ENCODE measurements at regions of chr7 and their contacts with region 1.

Region 1: DNA sequence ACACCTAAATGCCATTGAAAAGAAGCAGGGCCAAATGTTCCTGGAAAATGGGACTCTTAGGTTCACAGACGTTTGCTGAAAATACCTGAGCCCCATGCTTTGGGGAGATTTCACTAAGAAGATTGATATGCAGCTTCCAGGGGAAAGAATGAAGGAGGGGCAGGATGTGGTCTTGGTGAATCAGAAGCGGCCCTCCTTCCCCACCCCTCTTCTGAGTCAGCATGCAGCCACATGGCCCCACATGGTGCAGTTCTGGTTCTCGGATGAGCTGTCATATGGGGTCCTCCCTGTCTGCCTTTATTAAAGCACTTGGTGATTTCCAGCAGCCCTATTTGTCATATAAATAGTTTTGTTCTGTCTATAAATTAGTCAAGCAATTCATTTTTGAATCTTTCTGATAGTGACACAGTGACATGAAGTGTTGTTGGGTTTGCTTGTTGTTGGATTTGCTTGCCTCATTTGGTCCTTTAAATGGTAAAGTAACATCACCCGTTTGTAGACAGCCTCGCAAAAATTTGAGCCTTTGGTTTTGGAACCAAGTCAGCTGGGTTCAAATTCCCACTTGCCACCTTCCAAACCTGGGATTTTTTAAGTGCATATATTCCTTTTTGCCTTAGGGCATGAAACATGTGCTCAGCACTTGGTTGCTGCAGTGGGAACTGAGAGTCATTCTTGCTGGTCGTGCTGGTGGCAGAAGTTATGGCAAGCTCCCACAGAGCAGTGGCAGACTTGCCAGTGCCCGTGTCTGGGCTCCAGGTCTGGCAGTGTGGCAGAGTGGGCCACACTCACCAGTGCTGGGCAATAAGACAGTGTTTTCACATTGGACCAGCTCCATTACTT is 68.1 kb upstream of the CDK6 start:
- DNase-seq: peak; percentile 96
- H3K4me3 Mint-ChIP-seq: peak overlapping the region; percentile 18
- H3K27ac Mint-ChIP-seq: peak overlapping the region; percentile 84
- H3K4me1 Mint-ChIP-seq: peaks cover 26% of the 10 kb centered on the region
- H3K27me3 Mint-ChIP-seq: peaks cover 5% of the 10 kb centered on the region

Region 2: DNA sequence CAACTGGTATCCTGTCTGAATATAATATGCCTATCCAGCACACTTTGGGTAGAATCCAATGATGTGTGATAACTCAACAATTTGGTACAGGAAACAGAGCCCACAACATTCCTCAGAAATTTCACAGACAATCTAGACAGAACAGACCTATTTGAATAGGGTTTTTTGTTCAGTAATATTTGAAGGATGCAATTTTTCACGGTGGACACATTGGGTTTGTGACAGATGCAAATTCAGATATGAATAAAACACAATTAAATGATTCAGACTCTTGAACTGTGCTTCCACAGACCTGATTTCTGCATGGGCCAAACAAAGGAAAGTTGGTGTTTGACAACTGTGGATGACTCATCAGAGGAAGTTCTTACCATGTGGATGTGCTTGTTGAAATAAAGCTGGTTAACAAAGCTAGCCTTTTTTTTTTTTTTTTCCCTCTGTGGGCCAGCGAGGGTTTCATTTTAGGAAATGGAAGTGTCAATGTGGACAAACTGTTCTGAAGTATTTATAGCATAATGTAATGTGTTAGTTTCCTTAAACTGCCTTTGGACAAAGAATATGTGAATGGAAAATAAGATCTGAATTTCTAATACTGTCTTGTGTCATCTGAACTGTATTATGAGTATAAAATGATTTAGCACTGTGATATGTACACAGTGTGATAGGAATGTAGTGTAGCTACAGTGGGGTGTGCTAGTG is 271.2 kb before region 1 on chr7:
- CTCF ChIA-PET with region 1: no interaction called
- intact Hi-C with region 1: loop called (anchors 1 kb)
- DNase-seq: peak; percentile 49
- H3K4me3 Mint-ChIP-seq: no peak overlapping the region
- H3K27ac Mint-ChIP-seq: peak overlapping the region; percentile 92
- H3K4me1 Mint-ChIP-seq: peaks cover 84% of the 10 kb centered on the region
- H3K27me3 Mint-ChIP-seq: no peaks in the 10 kb centered on the region

Region 3: GRCh38 chr7:92717993-92718716 is 186.4 kb before region 1 on chr7:
- CTCF ChIA-PET with region 1: no interaction called
- intact Hi-C with region 1: loop called (anchors 1 kb)
- DNase-seq: peak; percentile 82
- H3K4me3 Mint-ChIP-seq: peak overlapping the region; percentile 79
- H3K27ac Mint-ChIP-seq: peak overlapping the region; percentile 93
- H3K4me1 Mint-ChIP-seq: peaks cover 74% of the 10 kb centered on the region
- H3K27me3 Mint-ChIP-seq: no peaks in the 10 kb centered on the region

Region 4: DNA sequence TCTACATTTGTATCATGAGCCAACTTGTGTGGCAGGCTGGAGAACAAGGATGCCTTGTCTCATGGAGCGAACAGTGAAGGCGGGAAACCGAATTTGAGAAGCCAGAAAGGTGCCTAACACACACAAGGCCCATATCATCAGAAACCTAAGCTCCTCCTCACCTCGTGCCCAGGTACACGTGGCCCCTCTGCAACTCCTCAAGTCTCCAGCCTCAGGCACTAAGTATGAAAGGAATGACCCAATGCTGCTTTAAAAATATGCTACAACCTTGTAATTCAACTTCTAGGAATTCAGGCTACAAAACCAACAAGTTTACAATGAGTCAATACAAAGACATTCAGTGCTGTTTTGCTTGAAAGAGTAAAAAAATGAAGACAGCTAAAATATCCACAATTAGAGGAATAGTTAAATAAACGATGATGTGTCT is 163.8 kb before region 1 on chr7:
- CTCF ChIA-PET with region 1: no interaction called
- intact Hi-C with region 1: no loop called
- DNase-seq: no peak
- H3K4me3 Mint-ChIP-seq: no peak overlapping the region
- H3K27ac Mint-ChIP-seq: peak overlapping the region; percentile 48
- H3K4me1 Mint-ChIP-seq: peaks cover 63% of the 10 kb centered on the region
- H3K27me3 Mint-ChIP-seq: no peaks in the 10 kb centered on the region

Region 5: GRCh38 chr7:92854501-92855238 is 49.8 kb before region 1 on chr7:
- CTCF ChIA-PET with region 1: interaction called, 4 read pairs
- intact Hi-C with region 1: loop called (anchors 1 kb)
- DNase-seq: peak; percentile 39
- H3K4me3 Mint-ChIP-seq: no peak overlapping the region
- H3K27ac Mint-ChIP-seq: peak overlapping the region; percentile 46
- H3K4me1 Mint-ChIP-seq: peaks cover 16% of the 10 kb centered on the region
- H3K27me3 Mint-ChIP-seq: peaks cover 6% of the 10 kb centered on the region

Region 6: DNA sequence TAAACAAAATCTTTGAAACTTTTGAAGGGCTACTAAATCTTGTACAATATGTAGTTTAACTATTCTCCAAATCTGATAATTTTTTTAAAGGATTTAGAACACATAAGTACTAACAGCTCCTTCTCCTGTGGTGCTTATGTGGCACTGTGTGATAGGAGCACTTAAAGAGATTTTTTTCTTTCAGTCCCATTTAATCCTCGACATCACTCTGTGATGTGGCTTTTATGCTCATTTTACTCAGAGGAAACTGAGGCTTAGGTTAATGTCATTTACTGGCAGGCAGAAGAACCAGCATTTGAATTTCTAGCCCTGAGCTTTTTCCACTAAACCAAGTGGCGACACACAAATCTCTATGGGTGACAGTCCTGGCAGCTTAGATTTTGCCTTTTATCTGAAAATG is 120.9 kb after region 1 on chr7:
- CTCF ChIA-PET with region 1: no interaction called
- intact Hi-C with region 1: loop called (anchors 5 kb)
- DNase-seq: peak; percentile 17
- H3K4me3 Mint-ChIP-seq: no peak overlapping the region
- H3K27ac Mint-ChIP-seq: peak overlapping the region; percentile 50
- H3K4me1 Mint-ChIP-seq: peaks cover 35% of the 10 kb centered on the region
- H3K27me3 Mint-ChIP-seq: peaks cover 14% of the 10 kb centered on the region

Region 7: GRCh38 chr7:93218997-93219827 is 314.7 kb after region 1 on chr7:
- CTCF ChIA-PET with region 1: no interaction called
- intact Hi-C with region 1: no loop called
- DNase-seq: no peak
- H3K4me3 Mint-ChIP-seq: no peak overlapping the region
- H3K27ac Mint-ChIP-seq: no peak overlapping the region
- H3K4me1 Mint-ChIP-seq: no peaks in the 10 kb centered on the region
- H3K27me3 Mint-ChIP-seq: peaks cover 14% of the 10 kb centered on the region

Region 8: DNA sequence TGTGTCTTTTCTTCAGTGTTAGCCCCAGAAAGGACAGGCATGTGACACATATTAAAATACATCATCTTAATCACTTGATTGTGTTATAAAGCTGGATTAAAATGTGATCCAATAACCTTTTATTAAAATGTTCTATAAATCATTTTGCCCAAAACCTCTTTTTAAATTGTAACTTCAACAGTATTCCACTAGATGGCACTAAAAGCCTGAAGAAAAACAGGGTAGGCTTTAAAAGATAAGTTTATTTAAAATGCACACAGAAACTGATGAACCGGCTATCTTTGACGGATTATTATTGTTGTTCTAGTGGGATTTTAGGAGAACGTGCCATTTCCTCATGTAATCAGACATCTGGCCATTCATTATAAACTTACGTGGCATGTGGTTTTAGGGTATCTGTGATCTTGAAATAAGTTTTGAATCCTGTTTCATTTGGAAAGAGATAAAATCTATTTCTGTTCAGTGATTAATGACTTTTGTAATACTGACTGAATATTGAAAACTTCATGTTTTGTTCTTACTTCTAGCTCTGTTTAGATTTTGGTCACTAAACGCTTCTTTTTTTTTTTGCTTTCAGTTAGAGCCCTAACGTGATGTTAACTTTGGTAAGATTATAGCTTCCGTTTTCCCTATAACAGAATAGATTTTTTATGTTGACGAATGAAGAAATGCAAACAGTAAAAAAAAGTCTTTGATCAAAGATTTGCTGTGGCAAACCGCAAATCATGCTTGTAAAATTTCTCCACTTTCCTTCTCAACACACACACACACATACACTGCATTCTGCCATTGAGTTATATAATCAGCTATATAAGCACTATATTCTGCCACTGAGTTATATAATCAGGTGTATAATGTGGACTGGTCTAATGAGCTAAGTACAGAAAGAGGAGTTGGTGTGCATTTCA is 341.3 kb after region 1 on chr7:
- CTCF ChIA-PET with region 1: no interaction called
- intact Hi-C with region 1: no loop called
- DNase-seq: no peak
- H3K4me3 Mint-ChIP-seq: no peak overlapping the region
- H3K27ac Mint-ChIP-seq: no peak overlapping the region
- H3K4me1 Mint-ChIP-seq: peaks cover 6% of the 10 kb centered on the region
- H3K27me3 Mint-ChIP-seq: no peaks in the 10 kb centered on the region

Region 9: DNA sequence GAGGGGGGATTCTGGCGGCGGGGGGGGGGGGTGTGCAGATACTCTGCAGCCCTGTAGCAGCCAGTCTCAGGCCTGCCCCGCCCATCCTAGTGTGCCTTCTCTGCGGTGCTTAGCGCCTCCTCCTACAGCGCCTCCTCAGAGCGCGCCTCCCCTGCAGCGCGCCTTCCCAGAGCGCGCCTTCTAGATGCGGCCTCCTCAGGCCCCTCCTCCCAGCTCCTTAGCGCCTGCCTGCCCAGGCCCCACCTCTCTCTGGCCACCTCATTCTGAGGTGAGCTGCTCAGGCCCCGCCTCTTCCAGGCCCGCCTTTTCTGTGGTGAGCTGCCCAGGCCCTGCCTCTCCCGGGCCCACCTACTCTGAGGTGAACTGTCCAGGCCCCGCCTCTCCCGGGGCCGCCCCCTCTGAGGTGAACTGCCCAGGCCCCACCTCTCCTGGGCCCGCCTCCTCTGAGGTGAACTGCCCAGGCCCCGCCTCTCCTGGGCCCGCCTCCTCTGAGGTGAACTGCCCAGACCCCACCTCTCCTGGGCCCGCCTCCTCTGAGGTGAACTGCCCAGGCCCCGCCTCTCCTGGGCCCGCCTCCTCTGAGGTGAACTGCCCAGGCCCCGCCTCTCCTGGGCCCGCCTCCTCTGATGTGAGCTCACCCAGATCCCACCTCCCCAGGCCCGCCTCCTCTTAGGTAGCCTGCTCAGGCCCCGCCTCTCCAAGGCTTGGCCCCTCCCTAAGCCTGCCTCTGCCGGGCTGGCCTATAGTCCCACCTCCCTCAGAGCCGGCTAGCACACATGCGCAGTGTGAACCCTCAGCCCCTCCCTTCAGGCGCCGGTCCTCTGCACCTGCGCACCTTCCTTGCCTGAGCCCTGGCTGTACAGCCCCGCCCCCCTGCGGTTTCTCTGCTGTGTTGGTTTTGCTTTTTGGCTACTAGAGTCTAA is 1753.5 kb after region 1 on chr7:
- CTCF ChIA-PET with region 1: no interaction called
- intact Hi-C with region 1: loop called (anchors 2 kb)
- DNase-seq: peak; percentile 95
- H3K4me3 Mint-ChIP-seq: peak overlapping the region; percentile 84
- H3K27ac Mint-ChIP-seq: no peak overlapping the region
- H3K4me1 Mint-ChIP-seq: peaks cover 13% of the 10 kb centered on the region
- H3K27me3 Mint-ChIP-seq: peaks cover 24% of the 10 kb centered on the region